Activated CD4-positive, alpha-beta T cell treated with anti-CD3 and anti-CD28 coated beads, Interleukin-2, amount 10 ng/mL, durations not matched to agents 7 days and 5 days (primary cell): ENCODE measurements at regions of chr17 and their contacts with region 1.

Region 1: DNA sequence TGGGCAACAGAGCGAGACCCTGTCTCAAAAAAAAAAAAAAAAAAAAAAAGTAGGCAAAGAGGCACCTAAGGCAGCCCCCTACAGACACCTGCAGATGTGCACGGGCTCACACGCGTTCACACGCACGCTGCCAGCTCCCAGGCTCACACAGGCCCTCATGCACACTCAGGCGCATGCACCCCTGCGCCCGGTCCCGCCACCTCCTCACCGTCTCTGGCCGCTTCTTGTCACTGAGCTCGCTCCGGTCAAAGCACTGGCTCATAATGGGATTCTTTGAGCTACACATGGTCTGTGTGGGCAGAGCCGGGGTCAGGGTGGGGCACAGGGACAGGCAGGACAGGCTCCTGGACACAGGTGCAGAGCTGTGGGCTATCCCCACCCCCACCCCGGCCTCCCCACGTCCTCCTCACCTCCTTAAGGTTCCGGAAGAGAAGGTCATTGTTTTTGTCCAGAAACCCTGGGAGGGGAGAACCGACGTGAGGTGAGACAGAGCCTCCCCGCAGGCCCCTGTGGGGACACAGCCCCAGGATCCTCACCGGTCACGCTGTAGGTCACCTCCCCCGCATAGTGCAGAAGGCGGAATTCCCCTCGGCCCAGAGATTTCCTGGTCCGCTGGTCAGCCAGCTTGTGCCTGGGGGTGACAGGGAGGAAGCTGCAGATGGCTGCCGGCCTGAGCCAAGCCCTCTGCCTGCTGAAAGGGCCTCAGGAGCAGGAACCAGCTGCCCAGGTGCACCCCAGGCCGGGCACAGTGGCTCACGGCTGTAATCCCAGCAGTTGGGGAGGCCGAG is 17.9 kb downstream of the MYO1C start:
- DNase-seq: no peak
- H3K4me3 Mint-ChIP-seq: no peak overlapping the region
- H3K27ac Mint-ChIP-seq: no peak overlapping the region
- H3K4me1 Mint-ChIP-seq: peaks cover 16% of the 10 kb centered on the region
- H3K27me3 Mint-ChIP-seq: no peaks in the 10 kb centered on the region

Region 2: DNA sequence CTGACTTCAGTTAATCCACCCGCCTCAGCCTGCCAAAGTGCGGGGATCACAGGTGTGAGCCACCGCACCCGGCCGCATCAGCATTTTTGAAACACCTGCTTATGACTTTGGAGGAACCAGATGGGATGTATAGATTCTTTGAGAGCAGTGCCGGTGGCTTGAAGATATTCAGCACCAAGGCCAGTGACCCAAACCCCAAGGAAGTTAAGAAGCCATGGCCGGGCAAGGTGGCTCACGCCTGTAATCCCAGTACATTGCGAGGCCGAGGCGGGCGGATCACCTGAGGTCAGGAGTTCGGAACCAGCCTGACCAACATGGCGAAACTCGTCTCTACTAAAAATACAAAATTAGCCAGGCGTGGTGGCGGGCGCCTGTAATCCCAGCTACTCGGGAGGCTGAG is 151.3 kb before region 1 on chr17:
- CTCF ChIA-PET with region 1: no interaction called
- POLR2A ChIA-PET with region 1: no interaction called
- DNase-seq: no peak
- H3K4me3 Mint-ChIP-seq: no peak overlapping the region
- H3K27ac Mint-ChIP-seq: no peak overlapping the region
- H3K4me1 Mint-ChIP-seq: no peaks in the 10 kb centered on the region
- H3K27me3 Mint-ChIP-seq: peaks cover 8% of the 10 kb centered on the region

Region 3: DNA sequence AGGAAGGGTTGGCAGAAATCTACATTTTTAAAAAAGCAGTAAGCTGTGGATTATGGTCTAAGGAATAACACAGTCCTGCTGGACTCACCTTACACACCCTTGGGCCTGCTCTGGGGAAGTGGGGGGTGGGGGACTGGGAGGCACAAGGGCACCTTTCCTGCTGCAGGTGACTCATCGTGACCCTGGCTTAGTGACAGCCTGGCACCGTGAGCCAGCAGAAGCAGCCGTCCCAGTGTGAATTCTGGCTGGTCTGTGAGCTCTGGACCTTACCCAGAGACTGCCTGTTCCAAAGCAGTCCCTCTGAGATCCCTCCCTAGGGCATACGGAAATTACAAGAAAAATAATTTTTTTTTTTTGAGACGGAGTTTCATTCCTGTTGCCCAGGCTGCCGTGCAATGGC is 14.4 kb before region 1 on chr17:
- CTCF ChIA-PET with region 1: no interaction called
- POLR2A ChIA-PET with region 1: interaction called, 12 read pairs
- DNase-seq: no peak
- H3K4me3 Mint-ChIP-seq: no peak overlapping the region
- H3K27ac Mint-ChIP-seq: no peak overlapping the region
- H3K4me1 Mint-ChIP-seq: peaks cover 38% of the 10 kb centered on the region
- H3K27me3 Mint-ChIP-seq: peaks cover 36% of the 10 kb centered on the region

Region 4: DNA sequence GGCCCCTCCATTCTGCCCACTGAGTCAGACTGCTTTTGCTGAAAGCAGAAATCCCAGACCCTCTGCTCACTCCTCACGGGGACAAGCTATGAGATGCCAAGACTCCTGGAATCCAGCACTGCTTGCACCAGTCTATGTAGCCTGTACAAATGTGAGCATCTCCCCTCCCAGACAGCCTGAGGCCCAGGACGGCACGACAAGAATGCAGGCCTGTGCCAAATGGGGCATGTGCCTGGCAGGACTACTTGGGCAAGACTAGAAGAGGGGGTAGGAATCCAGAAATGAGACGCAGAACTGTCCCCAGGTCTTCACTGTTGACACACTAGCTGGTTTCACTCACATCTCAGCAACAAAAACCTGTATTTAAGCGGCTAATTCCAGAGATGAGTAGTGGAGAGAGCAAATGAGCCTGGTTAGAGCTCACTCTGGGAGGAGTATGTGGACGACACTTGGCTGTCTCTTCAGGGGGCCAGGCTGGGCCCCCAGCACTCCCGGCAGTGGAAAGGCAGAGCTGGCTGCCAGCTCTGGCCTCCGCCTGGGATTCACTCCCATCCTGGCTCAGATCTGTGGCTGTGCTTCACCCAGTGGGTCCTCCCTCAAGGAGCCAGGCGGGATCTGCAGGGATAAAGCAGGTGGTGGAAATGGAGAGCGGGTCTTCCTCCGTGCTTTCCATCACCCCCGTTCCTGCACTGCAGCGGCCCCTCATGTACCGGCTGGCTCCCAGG is 20.8 kb after region 1 on chr17:
- CTCF ChIA-PET with region 1: no interaction called
- POLR2A ChIA-PET with region 1: no interaction called
- DNase-seq: no peak
- H3K4me3 Mint-ChIP-seq: no peak overlapping the region
- H3K27ac Mint-ChIP-seq: no peak overlapping the region
- H3K4me1 Mint-ChIP-seq: peaks cover 17% of the 10 kb centered on the region
- H3K27me3 Mint-ChIP-seq: no peaks in the 10 kb centered on the region